Activated B cell treated with CpG ODN at 0.5 μM for 24 hours (primary cell): ENCODE measurements at regions of chr1 and their contacts with region 1.

Region 1: GRCh38 chr1:111516005-111516535 is 12.6 kb upstream of the ADORA3 start:
- DNase-seq: peak; percentile 50
- ATAC-seq: peak; percentile 74
- H3K4me3 Mint-ChIP-seq: peak overlapping the region; percentile 87
- H3K27ac Mint-ChIP-seq: peak overlapping the region; percentile 84
- H3K4me1 Mint-ChIP-seq: peaks cover 41% of the 10 kb centered on the region
- H3K27me3 Mint-ChIP-seq: no peaks in the 10 kb centered on the region
- CTCF ChIP-seq: peak; percentile 27

Region 2: GRCh38 chr1:110903853-110904484 is 612.1 kb before region 1 on chr1:
- CTCF ChIA-PET with region 1: no interaction called
- POLR2A ChIA-PET with region 1: interaction called, 11 read pairs
- intact Hi-C with region 1: no loop called
- DNase-seq: no peak
- ATAC-seq: peak; percentile 26
- H3K4me3 Mint-ChIP-seq: no peak overlapping the region
- H3K27ac Mint-ChIP-seq: peak overlapping the region; percentile 57
- H3K4me1 Mint-ChIP-seq: peaks cover 41% of the 10 kb centered on the region
- H3K27me3 Mint-ChIP-seq: no peaks in the 10 kb centered on the region
- CTCF ChIP-seq: no peak

Region 3: GRCh38 chr1:111471012-111471411 is 45.1 kb before region 1 on chr1:
- CTCF ChIA-PET with region 1: no interaction called
- POLR2A ChIA-PET with region 1: interaction called, 10 read pairs
- intact Hi-C with region 1: no loop called
- DNase-seq: peak; percentile 45
- ATAC-seq: peak; percentile 92
- H3K4me3 Mint-ChIP-seq: no peak overlapping the region
- H3K27ac Mint-ChIP-seq: no peak overlapping the region
- H3K4me1 Mint-ChIP-seq: peaks cover 29% of the 10 kb centered on the region
- H3K27me3 Mint-ChIP-seq: no peaks in the 10 kb centered on the region
- CTCF ChIP-seq: no peak

Region 4: GRCh38 chr1:111538343-111539025 is 22.4 kb after region 1 on chr1:
- CTCF ChIA-PET with region 1: no interaction called
- POLR2A ChIA-PET with region 1: no interaction called
- intact Hi-C with region 1: no loop called
- DNase-seq: no peak
- ATAC-seq: no peak
- H3K4me3 Mint-ChIP-seq: no peak overlapping the region
- H3K27ac Mint-ChIP-seq: no peak overlapping the region
- H3K4me1 Mint-ChIP-seq: no peaks in the 10 kb centered on the region
- H3K27me3 Mint-ChIP-seq: peaks cover 2% of the 10 kb centered on the region
- CTCF ChIP-seq: no peak

Region 5: DNA sequence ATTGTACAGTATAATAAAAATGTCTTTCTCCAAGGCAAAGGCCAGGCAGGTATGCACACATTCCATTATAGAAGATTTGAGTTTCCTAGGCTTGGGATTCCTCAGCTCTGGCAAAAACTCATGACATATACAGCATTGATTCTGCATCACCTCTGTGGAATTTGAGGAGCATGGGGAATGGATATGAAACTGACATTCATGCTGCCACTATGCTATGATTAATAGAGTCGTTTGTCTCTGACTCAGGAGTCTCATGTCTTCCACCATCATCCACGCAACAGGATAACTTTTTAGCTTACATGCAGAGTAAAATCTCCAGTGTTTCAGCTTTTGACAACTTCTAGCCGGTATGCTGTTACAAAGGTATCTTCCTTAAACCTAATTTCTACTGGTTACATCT is 37.1 kb after region 1 on chr1:
- CTCF ChIA-PET with region 1: no interaction called
- POLR2A ChIA-PET with region 1: no interaction called
- intact Hi-C with region 1: loop called (anchors 5 kb)
- DNase-seq: no peak
- ATAC-seq: no peak
- H3K4me3 Mint-ChIP-seq: no peak overlapping the region
- H3K27ac Mint-ChIP-seq: no peak overlapping the region
- H3K4me1 Mint-ChIP-seq: no peaks in the 10 kb centered on the region
- H3K27me3 Mint-ChIP-seq: no peaks in the 10 kb centered on the region
- CTCF ChIP-seq: no peak